Heart right ventricle (tissue), 16 donors: ENCODE measurements at regions of chr13 and their contacts with region 1.

Region 1: DNA sequence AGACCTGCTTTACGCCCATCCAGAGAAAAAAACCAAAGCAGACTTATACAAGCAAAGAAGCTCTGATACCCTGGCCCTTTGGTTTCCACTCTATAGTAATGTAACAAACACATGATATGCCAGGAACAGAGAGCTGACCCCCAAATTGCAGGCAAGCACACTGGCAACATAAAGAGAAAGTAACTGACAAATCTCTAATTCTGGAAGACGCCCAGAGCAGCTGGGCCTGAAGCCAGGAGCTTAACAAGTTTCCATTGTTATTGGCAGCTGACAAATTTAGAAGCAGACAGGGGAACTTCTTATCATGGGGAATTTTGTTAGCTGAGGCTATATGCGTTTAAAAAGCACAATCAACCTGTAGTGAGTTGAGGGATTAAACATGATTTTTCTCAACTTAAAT is 158.0 kb downstream of the DLEU7 start:
- DNase-seq: peak; percentile 81 to 90
- ATAC-seq: peak; percentile 72 to 92 (median 80)
- H3K4me3 ChIP-seq: no peak overlapping the region
- H3K27ac ChIP-seq: peak overlapping the region; percentile 2 to 89 (median 74)
- H3K4me1 ChIP-seq: peaks cover 0 to 49% (median 33%) of the 10 kb centered on the region in 9 donors
- H3K27me3 ChIP-seq: no peaks in the 10 kb centered on the region
- CTCF ChIP-seq: no peak

Region 2: GRCh38 chr13:50589139-50589538 is 96.4 kb before region 1 on chr13:
- intact Hi-C with region 1: loop called in 3 of 10 experiments (anchors 5 to 10 kb)
- DNase-seq: no peak
- ATAC-seq: peak in 3 of 8 donors; percentile 36 to 52 (median 45)
- H3K4me3 ChIP-seq: no peak overlapping the region
- H3K27ac ChIP-seq: no peak overlapping the region
- H3K4me1 ChIP-seq: peaks cover 0 to 41% (median 14%) of the 10 kb centered on the region in 9 donors
- H3K27me3 ChIP-seq: no peaks in the 10 kb centered on the region
- CTCF ChIP-seq: no peak

Region 3: GRCh38 chr13:50626101-50626547 is 59.4 kb before region 1 on chr13:
- intact Hi-C with region 1: no loop called
- DNase-seq: no peak
- ATAC-seq: no peak
- H3K4me3 ChIP-seq: no peak overlapping the region
- H3K27ac ChIP-seq: peak overlapping the region in 1 of 10 donors; percentile 63
- H3K4me1 ChIP-seq: peaks cover 0 to 30% (median 0%) of the 10 kb centered on the region in 9 donors
- H3K27me3 ChIP-seq: no peaks in the 10 kb centered on the region
- CTCF ChIP-seq: no peak

Region 4: DNA sequence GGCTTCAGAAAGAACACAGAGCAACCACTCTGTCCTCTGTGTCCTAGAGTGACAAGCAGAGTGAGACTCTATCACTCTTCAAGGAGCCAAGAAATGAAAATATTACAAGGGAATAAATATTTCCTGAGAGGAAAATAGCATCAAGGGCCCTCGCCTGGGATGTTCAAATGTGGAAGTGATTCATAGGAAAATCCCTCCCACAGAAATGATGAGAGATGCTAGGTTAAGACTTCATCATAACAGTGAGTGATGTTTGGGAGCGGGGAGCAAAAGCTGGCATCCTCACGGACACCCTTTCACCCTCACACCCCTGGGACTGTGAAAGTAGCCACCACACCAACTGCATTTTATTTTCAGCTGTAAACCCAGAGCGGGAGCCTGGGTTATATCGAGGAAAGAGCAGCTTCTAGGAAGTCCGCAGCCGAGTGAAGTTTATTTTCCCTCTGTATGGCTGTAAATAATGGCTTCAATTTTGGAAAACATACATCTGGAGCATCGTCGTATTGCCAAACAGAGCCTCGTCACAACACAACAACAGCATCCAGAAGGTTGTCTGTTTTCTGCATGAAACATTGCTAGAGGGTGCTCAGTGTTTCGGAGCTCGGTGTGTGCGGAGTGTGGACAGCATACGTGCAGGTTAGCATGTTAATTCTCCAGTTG is 103.2 kb after region 1 on chr13:
- intact Hi-C with region 1: loop called in 1 of 10 experiments (anchors 10 kb)
- DNase-seq: no peak
- ATAC-seq: peak in 1 of 8 donors; percentile 26
- H3K4me3 ChIP-seq: no peak overlapping the region
- H3K27ac ChIP-seq: no peak overlapping the region
- H3K4me1 ChIP-seq: no peaks in the 10 kb centered on the region
- H3K27me3 ChIP-seq: no peaks in the 10 kb centered on the region
- CTCF ChIP-seq: no peak

Region 5: DNA sequence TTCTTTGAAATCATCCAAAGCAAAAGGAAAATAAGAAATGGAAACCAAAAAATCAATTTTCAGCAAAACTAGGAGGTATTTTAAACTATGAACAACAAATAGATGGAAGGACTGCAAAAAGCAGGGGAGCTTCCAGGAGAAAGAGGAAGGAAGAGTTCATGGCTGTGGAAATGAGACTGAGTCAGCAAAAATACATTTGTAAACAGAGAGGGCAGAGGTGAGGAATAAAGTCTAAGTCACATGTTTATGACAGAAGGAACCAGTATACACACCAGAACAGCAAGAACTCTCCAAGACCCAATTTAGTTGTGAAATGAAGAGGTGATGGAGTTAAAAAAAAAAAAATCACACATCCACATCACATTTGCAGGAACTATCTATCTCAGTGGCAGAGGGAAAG is 293.7 kb after region 1 on chr13:
- intact Hi-C with region 1: no loop called
- DNase-seq: no peak
- ATAC-seq: peak in 4 of 8 donors; percentile 25 to 66 (median 56)
- H3K4me3 ChIP-seq: no peak overlapping the region
- H3K27ac ChIP-seq: peak overlapping the region in 1 of 10 donors; percentile 72
- H3K4me1 ChIP-seq: peaks cover 0 to 13% (median 0%) of the 10 kb centered on the region in 9 donors
- H3K27me3 ChIP-seq: no peaks in the 10 kb centered on the region
- CTCF ChIP-seq: no peak